ENCODE measurements at regions of chr21 and their contacts with region 1.

Region 1: DNA sequence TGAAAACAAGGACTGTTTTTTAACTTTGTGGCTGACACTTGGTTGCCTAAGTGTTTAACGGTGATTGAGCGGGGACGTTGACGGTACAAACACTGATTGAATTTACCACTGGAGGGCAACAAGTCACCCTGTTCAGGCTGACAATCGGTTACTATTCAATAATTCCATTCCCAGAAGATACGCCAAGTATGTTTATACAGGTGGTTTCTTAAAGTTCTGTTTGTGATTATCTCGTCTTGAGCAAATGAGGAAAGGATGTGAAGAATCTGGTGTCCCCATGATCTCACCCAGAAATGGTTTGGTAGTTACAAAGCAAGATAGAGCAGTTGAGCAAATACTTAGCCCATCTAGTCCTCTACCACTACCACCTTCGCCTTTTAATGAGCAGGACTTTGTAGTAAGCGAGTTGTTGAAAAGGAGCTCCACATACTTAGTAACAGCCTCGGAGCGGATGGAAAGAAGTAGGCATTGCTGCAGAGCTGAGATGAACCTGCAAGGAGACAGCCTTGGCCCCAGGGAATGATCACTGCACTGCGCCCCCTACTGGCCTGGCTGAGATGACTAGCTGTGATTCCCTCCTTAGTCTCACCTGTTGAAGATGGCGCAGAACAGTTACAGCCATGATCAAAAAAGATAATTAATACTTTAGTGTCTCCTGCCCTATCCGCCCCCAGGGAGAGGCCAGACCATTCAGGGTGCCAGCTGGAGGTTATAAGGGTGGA is 36.3 kb downstream of the IFNAR1 start:
- DNase-seq: peak; percentile 73 to 84 (median 79)
- H3K4me3 ChIP-seq: peak overlapping the region; percentile 76
- H3K4me3 Mint-ChIP-seq: peak overlapping the region; percentile 84 to 92 (median 87)
- H3K27ac ChIP-seq: peak overlapping the region; percentile 62
- H3K27ac Mint-ChIP-seq: peak overlapping the region; percentile 64 to 99 (median 90)
- H3K4me1 ChIP-seq: peaks cover 21% of the 10 kb centered on the region
- H3K4me1 Mint-ChIP-seq: peaks cover 16 to 24% (median 21%) of the 10 kb centered on the region in 3 donors
- H3K27me3 ChIP-seq: no peaks in the 10 kb centered on the region
- H3K27me3 Mint-ChIP-seq: peaks cover 0 to 3% of the 10 kb centered on the region in 2 donors

Region 2: DNA sequence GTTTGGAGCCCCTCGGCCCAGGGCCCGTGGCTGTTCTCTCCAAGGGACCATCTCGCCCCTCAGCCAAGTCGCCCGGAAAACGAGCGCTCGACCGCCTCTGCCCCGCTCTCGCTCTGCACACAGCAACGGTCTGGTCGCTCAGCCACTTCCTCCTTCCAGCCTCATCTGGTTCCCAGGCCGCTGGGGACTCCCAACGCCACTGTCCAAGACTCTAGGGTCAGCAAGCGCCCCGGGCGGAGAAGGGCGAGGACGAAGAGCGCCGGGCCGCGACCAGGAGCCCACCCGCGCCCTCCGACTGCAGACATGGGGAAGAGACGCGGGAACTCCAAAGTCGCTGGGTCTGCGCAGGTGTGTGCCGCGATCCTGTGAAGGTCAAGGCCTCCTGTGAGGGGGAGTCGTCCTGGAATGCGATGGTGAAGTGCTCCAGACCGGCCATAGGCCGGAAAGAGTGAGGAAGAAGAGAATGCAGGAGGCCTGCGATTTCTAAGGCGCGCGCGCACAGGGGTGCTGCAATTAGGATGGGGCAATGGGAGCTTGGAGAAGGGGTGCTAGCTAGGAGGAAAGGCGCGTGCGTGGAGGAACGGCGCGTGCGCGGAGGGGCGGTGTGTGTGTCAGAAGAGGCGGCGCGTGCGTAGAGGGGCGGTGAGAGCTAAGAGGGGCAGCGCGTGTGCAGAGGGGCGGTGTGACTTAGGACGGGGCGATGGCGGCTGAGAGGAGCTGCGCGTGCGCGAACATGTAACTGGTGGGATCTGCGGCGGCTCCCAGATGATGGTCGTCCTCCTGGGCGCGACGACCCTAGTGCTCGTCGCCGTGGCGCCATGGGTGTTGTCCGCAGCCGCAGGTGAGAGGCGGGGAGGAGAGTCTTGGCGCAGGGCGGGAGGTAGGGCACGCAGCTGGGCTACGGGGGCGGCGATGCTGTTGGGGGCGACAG is 36.5 kb before region 1 on chr21 and contains the start of gene IFNAR1:
- CTCF ChIA-PET with region 1: interaction called, 31 read pairs
- POLR2A ChIA-PET with region 1: interaction called, 37 read pairs
- DNase-seq: peak; percentile 96 to 100 (median 98)
- H3K4me3 ChIP-seq: peak within 1 kb of the TSS; percentile 72
- H3K4me3 Mint-ChIP-seq: no peak within 1 kb of the TSS
- H3K27ac ChIP-seq: peak within 1 kb of the TSS; percentile 94
- H3K27ac Mint-ChIP-seq: no peak within 1 kb of the TSS
- H3K4me1 ChIP-seq: peaks cover 40% of the 10 kb centered on the region
- H3K4me1 Mint-ChIP-seq: peaks cover 8 to 32% (median 25%) of the 10 kb centered on the region in 3 donors
- H3K27me3 ChIP-seq: no peaks in the 10 kb centered on the region
- H3K27me3 Mint-ChIP-seq: no peaks in the 10 kb centered on the region
- total RNA-seq, gene IFNAR1: 31.6 to 34.1 TPM

Region 3: DNA sequence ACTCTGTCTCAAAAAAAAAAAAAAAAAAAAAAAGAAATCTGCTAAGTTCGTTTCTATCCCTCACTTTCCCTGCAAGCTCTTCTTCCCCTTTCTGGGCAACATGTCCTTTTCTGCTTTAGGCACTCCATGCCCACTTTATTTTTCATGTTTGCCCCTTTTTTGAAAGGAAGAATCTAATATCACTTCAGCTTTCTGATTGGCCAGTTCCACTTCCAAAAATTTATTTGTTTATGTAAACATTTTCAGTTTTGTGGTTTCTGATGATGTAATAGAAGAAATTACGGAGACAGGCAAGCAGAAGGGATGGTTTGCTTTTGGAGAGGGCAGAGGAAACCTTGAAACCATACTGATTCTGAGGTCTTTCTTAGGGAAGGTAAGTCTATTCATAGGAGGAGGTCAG is 21.1 kb before region 1 on chr21:
- CTCF ChIA-PET with region 1: interaction called, 21 read pairs
- POLR2A ChIA-PET with region 1: no interaction called
- DNase-seq: no peak
- H3K4me3 ChIP-seq: no peak overlapping the region
- H3K4me3 Mint-ChIP-seq: no peak overlapping the region
- H3K27ac ChIP-seq: no peak overlapping the region
- H3K27ac Mint-ChIP-seq: peak overlapping the region in 4 of 8 donors; percentile 20 to 91 (median 74)
- H3K4me1 ChIP-seq: no peaks in the 10 kb centered on the region
- H3K4me1 Mint-ChIP-seq: peaks cover 12 to 22% (median 17%) of the 10 kb centered on the region in 3 donors
- H3K27me3 ChIP-seq: no peaks in the 10 kb centered on the region
- H3K27me3 Mint-ChIP-seq: no peaks in the 10 kb centered on the region

Region 4: GRCh38 chr21:33386222-33386784 is 25.3 kb after region 1 on chr21:
- CTCF ChIA-PET with region 1: interaction called, 34 read pairs
- POLR2A ChIA-PET with region 1: interaction called, 37 read pairs
- DNase-seq: no peak
- H3K4me3 ChIP-seq: no peak overlapping the region
- H3K4me3 Mint-ChIP-seq: no peak overlapping the region
- H3K27ac ChIP-seq: no peak overlapping the region
- H3K27ac Mint-ChIP-seq: no peak overlapping the region
- H3K4me1 ChIP-seq: peaks cover 41% of the 10 kb centered on the region
- H3K4me1 Mint-ChIP-seq: peaks cover 38 to 50% (median 42%) of the 10 kb centered on the region in 3 donors
- H3K27me3 ChIP-seq: peaks cover 13% of the 10 kb centered on the region
- H3K27me3 Mint-ChIP-seq: peaks cover 22 to 39% of the 10 kb centered on the region in 2 donors

Measured in CD8-positive, alpha-beta memory T cell (primary cell).